ENCODE measurements at regions of chrX and their contacts with region 1.

Region 1: GRCh38 chrX:73076838-73077237 is 2.5 kb downstream of the PABPC1L2A start:
- DNase-seq: no peak
- ATAC-seq: no peak
- H3K4me3 ChIP-seq: no peak overlapping the region
- H3K4me1 ChIP-seq: no peaks in the 10 kb centered on the region
- CTCF ChIP-seq: no peak

Region 2: GRCh38 chrX:73262992-73263391 is 186.2 kb after region 1 on chrX:
- intact Hi-C with region 1: loop called in 1 of 2 experiments (anchors 10 kb)
- DNase-seq: no peak
- ATAC-seq: no peak
- H3K4me3 ChIP-seq: no peak overlapping the region
- H3K4me1 ChIP-seq: no peaks in the 10 kb centered on the region
- CTCF ChIP-seq: no peak